Gastrocnemius medialis (tissue), 4 donors: ENCODE measurements at regions of chr9 and their contacts with region 1.

Region 1: DNA sequence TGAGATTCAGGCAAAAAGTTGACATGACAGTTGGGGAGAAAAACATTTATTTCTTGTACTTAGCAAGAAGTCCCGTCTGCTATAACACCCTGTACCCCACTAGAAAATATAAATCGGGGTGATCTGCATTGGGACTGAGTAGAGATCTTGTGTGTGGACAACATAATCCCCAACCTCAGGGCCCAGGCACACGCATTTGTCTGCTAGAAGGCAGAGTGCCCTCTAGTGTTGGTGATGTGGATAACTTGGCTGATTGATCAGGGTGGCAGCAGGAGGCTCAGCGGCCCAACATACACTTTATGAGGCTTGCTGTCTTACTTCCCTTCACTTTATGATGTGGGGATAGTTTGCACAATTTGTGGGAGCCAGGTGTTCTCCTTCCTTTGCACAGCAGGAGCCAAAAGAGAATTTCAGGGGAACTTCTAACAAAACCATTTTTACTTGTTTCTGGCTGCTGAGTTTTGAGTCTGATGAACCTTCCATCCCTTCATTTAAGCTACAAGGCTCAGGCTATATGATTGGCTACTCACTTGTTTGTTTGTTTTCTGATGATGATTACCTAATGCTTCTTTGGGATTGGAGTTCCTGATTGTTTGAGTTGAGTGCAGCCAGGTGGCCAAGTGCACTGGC is 263.2 kb downstream of the DMAC1 start:
- DNase-seq: peak; percentile 3 to 14
- ATAC-seq: no peak
- H3K4me3 ChIP-seq: no peak overlapping the region
- H3K27ac ChIP-seq: no peak overlapping the region
- H3K4me1 ChIP-seq: no peaks in the 10 kb centered on the region
- H3K27me3 ChIP-seq: no peaks in the 10 kb centered on the region
- CTCF ChIP-seq: peak; percentile 14 to 67 (median 46)
- POLR2A ChIP-seq: no peak

Region 2: GRCh38 chr9:7045361-7045760 is 491.1 kb before region 1 on chr9:
- in situ Hi-C with region 1: loop called in 3 of 4 experiments (anchors 10 to 25 kb)
- intact Hi-C with region 1: no loop called
- DNase-seq: no peak
- ATAC-seq: no peak
- H3K4me3 ChIP-seq: no peak overlapping the region
- H3K27ac ChIP-seq: no peak overlapping the region
- H3K4me1 ChIP-seq: no peaks in the 10 kb centered on the region
- H3K27me3 ChIP-seq: no peaks in the 10 kb centered on the region
- CTCF ChIP-seq: no peak
- POLR2A ChIP-seq: no peak

Region 3: GRCh38 chr9:7055201-7055903 is 481.1 kb before region 1 on chr9:
- in situ Hi-C with region 1: loop called in 2 of 4 experiments (anchors 10 to 25 kb)
- intact Hi-C with region 1: loop called (anchors 2 kb)
- DNase-seq: no peak
- ATAC-seq: no peak
- H3K4me3 ChIP-seq: no peak overlapping the region
- H3K27ac ChIP-seq: no peak overlapping the region
- H3K4me1 ChIP-seq: peaks cover 14 to 16% of the 10 kb centered on the region in 2 donors
- H3K27me3 ChIP-seq: no peaks in the 10 kb centered on the region
- CTCF ChIP-seq: no peak
- POLR2A ChIP-seq: no peak

Region 4: GRCh38 chr9:7273391-7273974 is 262.9 kb before region 1 on chr9:
- in situ Hi-C with region 1: no loop called
- intact Hi-C with region 1: loop called (anchors 10 kb)
- DNase-seq: no peak
- ATAC-seq: no peak
- H3K4me3 ChIP-seq: no peak overlapping the region
- H3K27ac ChIP-seq: no peak overlapping the region
- H3K4me1 ChIP-seq: no peaks in the 10 kb centered on the region
- H3K27me3 ChIP-seq: no peaks in the 10 kb centered on the region
- CTCF ChIP-seq: peak in 2 of 5 experiments; percentile 41 to 46
- POLR2A ChIP-seq: no peak